Activated T-helper 1 cell treated with anti-CD3 and anti-CD28 coated beads, Interleukin-12 subunit alpha, Interleukin-12 subunit beta, Interleukin-2, Interleukin-4 antibody, amounts not matched to agents 30 ng/mL and 10 ng/mL and 1 ng/mL, durations not matched to agents 14 hours and 24 hours and 36 hours (primary cell): ENCODE measurements at regions of chr1 and their contacts with region 1.

Region 1: DNA sequence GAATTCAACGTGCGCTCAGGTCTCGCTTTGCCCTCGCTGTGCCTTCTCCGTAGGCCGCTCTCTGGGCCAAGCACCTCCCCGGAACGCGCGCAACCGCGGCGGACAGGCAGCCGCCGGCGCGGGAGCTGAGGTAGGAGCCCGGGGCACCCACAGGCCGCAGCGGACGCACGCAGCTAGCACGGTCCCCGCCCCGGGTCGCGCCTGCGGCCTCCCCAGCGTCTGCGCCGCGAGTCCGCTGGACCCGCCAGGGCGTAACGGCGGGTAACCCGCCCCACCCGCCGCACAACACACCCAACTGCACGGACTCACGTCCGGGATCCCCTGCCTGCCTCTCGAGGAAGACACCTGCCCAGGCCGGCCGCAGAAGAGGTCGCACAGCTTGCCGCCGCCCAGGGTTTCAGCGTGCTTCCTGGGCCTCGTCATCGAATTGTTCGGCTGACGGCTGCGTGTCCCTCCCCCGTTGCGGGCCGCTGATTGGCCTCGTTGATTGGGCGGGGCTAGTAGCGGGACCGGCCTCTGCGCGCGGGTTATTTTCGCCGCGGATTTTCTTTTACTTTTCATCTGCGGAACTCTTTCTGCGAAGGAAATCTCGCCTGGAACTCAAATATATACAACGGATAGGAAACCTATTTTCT is at the start of gene CLCC1:
- DNase-seq: peak; percentile 93
- H3K4me3 Mint-ChIP-seq: peak within 1 kb of the TSS; percentile 89
- H3K27ac Mint-ChIP-seq: peak within 1 kb of the TSS; percentile 94
- H3K4me1 Mint-ChIP-seq: peaks cover 26% of the 10 kb centered on the region
- H3K27me3 Mint-ChIP-seq: peaks cover 4% of the 10 kb centered on the region
- total RNA-seq, gene CLCC1: 23.1 and 23.4 TPM in 2 replicates

Region 2: DNA sequence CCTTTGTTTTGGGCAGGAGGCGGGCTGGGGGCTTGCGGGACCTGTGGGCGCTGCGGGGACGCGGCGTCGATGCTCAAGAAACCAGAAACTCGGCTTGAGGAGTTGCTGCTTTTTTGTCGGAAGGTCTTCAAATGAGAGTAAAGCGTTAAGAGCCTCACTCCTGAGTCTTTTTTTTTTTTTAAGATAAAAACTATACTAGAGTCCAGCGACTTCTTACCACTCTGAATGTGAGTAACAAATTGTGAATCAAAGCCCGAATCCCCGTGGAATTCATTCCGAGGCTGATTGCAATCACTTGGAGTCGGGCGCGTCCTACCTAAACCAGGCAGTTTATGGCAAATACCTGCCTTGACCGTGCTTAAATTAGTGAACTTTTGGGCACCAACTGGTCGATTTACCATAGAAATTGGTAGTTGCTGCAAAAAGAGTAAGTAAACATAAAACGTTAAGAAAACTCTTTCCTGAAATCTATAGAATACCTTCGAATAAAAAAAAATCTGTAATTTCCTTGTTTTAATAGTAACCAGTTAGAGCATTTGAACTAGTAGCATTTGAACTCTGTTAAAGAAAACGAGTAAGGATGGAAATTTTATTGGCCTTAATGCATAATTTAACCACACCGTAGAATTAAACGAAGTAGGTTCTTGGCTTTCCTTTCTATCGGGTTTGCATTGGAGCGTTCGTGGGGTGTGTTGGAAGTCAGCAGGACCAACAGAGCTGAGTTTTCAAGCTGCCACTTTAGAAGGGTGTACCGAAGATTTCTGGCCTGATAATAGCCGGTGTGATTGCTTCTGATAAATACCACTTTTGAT is 85.6 kb before region 1 on chr1:
- intact Hi-C with region 1: loop called (anchors 1 kb)
- DNase-seq: no peak
- H3K4me3 Mint-ChIP-seq: peak overlapping the region; percentile 89
- H3K27ac Mint-ChIP-seq: peak overlapping the region; percentile 48
- H3K4me1 Mint-ChIP-seq: peaks cover 45% of the 10 kb centered on the region
- H3K27me3 Mint-ChIP-seq: peaks cover 6% of the 10 kb centered on the region

Region 3: DNA sequence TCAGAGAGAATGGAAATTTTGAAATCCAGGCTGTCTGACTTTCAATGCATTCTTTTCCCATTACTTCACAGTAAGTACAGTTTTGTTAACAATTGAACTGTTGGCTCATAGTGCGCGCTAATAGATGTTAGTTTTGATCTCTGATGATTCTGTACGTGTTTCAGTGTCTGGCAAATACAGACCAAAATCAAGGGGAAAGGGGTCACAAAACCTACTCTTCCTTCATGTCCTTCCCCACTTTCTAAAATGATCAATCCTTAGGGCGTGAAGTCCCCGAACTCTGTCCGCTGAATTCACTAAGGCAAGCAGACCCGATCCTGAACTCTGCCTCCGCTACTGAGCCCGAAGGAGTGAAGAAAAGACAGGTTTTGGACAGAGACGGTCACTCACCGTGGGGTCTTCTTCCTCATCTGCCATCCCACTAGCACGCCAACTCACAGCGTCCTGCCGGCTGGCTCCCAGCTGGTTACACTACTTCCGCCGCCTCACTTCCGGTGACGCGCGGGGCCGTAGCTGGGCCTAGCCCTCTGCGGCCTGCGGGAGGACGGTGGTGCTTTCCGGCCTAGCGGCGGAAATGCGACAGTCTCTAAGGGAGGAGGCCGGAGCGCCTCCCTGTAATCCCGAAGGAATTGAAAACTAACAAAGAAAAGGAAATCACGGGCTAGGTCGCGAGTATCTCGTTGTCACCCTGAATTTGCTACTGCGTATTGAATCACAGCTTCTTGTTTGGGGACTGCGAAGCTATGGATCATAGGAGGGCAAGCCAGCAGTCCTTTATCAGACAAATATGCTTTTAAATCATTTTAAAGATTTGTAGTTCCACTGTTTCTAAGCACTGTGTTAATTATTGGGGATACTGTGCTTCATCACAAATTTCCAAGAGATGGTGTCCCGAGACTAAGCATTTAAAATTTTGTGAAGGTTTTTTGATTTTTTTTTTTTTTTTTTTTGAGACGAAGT is 112.6 kb after region 1 on chr1 and contains the start of gene TAF13:
- intact Hi-C with region 1: loop called (anchors 1 kb)
- DNase-seq: peak; percentile 87
- H3K4me3 Mint-ChIP-seq: peak within 1 kb of the TSS; percentile 99
- H3K27ac Mint-ChIP-seq: peak within 1 kb of the TSS; percentile 88
- H3K4me1 Mint-ChIP-seq: peaks cover 20% of the 10 kb centered on the region
- H3K27me3 Mint-ChIP-seq: peaks cover 1% of the 10 kb centered on the region
- total RNA-seq, gene TAF13: 28.8 and 32.6 TPM in 2 replicates

Region 4: DNA sequence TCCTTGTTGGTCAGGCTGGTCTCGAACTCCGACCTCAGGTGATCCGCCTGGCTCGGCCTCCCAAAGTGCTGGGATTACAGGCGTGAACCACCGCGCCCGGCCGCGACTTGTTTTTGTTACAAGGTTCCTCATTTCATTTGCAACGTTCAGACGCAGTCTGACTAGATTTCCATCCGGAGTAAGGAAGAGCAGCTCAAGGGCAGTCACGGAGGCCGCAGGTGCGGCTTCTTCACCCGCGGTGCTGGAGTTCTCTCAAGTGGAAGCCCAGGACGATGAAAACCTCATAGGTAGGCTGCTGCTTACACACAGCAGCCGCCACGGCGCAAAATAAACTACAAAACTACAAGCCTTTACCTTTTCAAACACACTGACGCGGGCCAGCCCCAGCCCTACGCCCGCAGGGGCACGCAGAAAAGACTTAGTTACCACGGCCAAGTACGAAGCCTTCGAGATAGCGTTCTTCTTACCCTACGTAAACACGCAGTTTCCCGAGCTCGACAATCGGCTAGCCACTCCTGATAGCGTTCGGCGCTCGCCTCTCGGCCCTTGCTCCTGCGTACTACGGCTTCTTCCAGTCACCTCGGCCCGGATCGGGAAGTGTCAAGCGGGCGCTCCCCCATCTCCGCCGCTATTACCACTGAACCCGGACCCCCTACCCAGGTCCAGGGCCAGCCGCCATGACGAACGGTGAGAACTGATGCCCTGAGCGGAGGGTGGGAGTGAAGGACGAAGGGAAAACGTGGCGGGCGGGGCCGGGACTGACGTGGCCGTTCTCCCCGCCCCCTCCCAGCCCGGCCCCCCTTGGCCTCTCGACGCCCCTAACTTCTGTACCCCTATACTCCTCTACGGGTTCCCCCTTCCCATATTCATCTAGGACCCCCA is 127.3 kb after region 1 on chr1 and contains the start of gene TMEM167B:
- intact Hi-C with region 1: loop called (anchors 1 kb)
- DNase-seq: peak; percentile 84
- H3K4me3 Mint-ChIP-seq: peak within 1 kb of the TSS; percentile 92
- H3K27ac Mint-ChIP-seq: peak within 1 kb of the TSS; percentile 93
- H3K4me1 Mint-ChIP-seq: peaks cover 21% of the 10 kb centered on the region
- H3K27me3 Mint-ChIP-seq: peaks cover 2% of the 10 kb centered on the region
- total RNA-seq, gene TMEM167B: 26.2 and 27.6 TPM in 2 replicates

Region 5: DNA sequence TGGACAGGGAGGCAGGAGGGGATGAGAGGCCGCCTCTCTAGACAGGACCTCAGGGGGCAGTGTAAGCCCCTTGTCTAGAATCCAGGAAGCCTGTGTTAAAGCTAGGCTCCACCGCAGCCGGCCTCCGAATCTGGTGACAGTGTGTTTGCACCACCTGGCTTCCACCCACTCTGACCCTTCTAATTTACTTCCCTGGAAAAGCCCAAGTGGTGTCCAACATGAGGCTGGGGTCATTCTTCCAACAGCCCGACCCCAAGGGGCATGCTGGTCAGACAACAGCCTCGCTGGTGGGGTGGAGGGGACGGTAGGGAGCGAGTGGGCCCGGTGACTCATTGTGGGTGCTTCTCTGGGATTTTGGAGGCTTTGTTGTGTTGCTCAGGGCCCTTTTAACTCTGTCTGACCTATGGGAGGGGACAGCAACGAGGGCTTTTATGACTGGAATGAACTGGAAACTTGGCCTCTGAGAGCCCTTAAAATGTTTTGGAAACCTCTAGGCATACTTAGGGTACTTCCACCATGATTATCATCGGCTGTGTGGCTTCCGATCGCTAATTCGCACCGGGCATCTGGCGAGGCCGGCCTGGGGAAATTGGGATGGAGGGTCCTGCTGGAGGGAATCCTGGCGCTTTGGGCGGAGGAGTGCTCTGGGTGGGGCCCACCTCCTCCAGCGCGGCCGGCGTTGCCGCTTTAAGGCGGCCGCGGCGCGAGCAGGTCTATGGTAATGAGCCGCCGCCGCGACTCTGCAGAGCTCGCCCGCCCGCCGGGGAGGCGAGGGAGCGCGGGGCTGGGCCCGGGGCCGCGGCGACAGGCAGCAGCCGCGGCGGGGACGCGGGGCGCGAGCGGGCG is 285.9 kb after region 1 on chr1 and contains the start of gene CELSR2:
- intact Hi-C with region 1: loop called (anchors 5 kb)
- DNase-seq: peak; percentile 67
- H3K4me3 Mint-ChIP-seq: peak within 1 kb of the TSS; percentile 72
- H3K27ac Mint-ChIP-seq: no peak within 1 kb of the TSS
- H3K4me1 Mint-ChIP-seq: peaks cover 6% of the 10 kb centered on the region
- H3K27me3 Mint-ChIP-seq: peaks cover 14% of the 10 kb centered on the region
- total RNA-seq, gene CELSR2: 4.1 and 4.9 TPM in 2 replicates